ENCODE measurements at regions of chr4 and their contacts with region 1.

Region 1: DNA sequence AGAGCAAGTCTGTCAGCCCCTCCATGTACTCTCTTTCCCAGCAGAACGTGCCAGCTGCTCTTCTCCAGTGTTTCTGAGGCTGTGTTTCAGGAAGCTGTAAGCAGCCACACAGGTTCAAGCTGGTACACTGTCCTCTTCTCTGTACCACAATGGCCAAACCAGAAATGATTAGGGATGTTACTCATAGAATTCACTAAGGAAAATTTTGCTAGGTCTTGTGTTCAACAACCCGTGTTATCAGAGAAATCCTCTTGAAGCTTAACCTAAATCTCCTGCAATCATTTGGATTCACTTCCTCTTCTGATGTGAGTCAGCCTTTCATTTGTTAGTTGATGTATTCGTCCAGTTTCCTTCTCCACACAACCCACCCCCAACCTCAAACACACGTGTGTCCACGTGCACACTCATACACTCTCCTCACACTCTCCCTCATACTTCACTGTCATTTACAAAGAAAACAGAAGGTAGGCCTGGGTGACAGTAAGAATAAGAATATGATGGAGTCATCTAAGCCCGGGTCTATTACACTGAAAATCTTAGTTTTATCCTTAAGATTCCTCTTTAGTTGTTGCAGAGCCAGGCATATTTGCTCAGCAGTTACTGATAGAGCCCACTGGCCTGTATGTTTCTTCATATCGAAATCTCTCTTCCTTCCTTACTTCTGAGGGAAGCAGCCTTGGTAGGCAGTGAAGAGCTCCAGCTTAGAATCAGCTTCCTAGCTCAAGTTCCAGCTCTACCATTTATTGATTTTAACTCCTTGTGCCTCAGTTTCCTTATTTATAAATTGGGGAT is 63.4 kb downstream of the DCUN1D4 start:
- DNase-seq: no peak
- H3K4me3 ChIP-seq: no peak overlapping the region
- H3K27ac ChIP-seq: no peak overlapping the region
- H3K4me1 ChIP-seq: no peaks in the 10 kb centered on the region
- H3K27me3 ChIP-seq: no peaks in the 10 kb centered on the region
- CTCF ChIP-seq: no peak
- EP300 ChIP-seq: no peak
- POLR2A ChIP-seq: no peak

Region 2: DNA sequence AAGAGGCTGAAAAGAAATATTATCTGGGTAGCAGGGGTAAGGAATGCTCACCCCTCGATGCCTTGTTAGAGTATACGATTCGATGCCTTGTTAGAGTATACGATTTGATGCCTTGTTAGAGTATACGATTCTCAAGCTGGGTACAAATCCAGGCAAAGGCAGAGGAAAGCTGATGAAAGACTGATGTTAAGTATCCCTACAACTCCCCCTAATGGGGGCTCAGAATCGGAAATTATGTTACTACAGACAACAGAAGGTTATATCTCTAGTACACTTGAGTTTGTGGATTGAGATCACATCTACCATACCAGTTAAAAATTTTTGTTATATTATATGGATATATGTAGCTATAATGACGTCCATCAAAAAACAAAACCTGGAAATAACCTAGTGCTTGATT is 109.0 kb after region 1 on chr4:
- intact Hi-C with region 1: loop called in 1 of 4 experiments (anchors 10 kb)
- DNase-seq: no peak
- H3K4me3 ChIP-seq: no peak overlapping the region
- H3K27ac ChIP-seq: no peak overlapping the region
- H3K4me1 ChIP-seq: peaks cover 2% of the 10 kb centered on the region
- H3K27me3 ChIP-seq: no peaks in the 10 kb centered on the region
- CTCF ChIP-seq: no peak
- EP300 ChIP-seq: no peak
- POLR2A ChIP-seq: no peak